ENCODE measurements at regions of chr3 and their contacts with region 1.

Region 1: DNA sequence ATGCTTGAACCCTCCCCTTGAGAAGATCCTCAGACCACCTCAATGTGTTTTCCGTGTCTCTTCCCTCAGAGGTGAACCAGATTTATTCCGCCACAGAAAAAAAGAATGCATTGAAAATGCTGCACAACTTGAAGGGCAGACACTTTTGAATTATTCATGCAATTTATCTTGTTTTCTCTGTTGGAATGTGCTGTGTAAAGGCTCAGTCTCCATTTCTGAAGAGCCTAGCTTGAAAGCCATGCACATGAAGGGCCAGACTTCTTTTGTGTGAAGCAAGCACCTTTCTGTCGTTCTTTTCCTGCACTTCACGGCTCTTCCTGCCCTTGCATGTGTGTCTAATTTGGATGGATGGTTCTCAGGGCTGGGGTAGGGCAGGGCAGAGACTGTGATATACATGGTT is 79.0 kb upstream of the ATP13A5 start:
- DNase-seq: no peak
- H3K4me3 ChIP-seq: no peak overlapping the region
- H3K27ac ChIP-seq: no peak overlapping the region
- H3K4me1 ChIP-seq: no peaks in the 10 kb centered on the region
- H3K27me3 ChIP-seq: no peaks in the 10 kb centered on the region
- CTCF ChIP-seq: no peak
- EP300 ChIP-seq: no peak
- POLR2A ChIP-seq: no peak
- RAD21 ChIP-seq: no peak

Region 2: GRCh38 chr3:193564012-193564411 is 106.5 kb after region 1 on chr3:
- CTCF ChIA-PET with region 1: interaction called, 30 read pairs
- POLR2A ChIA-PET with region 1: no interaction called
- DNase-seq: no peak
- H3K4me3 ChIP-seq: no peak overlapping the region
- H3K27ac ChIP-seq: no peak overlapping the region
- H3K4me1 ChIP-seq: no peaks in the 10 kb centered on the region
- H3K27me3 ChIP-seq: no peaks in the 10 kb centered on the region
- CTCF ChIP-seq: peak; percentile 67 to 70 (median 68)
- EP300 ChIP-seq: no peak
- POLR2A ChIP-seq: no peak
- RAD21 ChIP-seq: peak; percentile 69 to 74

Region 3: DNA sequence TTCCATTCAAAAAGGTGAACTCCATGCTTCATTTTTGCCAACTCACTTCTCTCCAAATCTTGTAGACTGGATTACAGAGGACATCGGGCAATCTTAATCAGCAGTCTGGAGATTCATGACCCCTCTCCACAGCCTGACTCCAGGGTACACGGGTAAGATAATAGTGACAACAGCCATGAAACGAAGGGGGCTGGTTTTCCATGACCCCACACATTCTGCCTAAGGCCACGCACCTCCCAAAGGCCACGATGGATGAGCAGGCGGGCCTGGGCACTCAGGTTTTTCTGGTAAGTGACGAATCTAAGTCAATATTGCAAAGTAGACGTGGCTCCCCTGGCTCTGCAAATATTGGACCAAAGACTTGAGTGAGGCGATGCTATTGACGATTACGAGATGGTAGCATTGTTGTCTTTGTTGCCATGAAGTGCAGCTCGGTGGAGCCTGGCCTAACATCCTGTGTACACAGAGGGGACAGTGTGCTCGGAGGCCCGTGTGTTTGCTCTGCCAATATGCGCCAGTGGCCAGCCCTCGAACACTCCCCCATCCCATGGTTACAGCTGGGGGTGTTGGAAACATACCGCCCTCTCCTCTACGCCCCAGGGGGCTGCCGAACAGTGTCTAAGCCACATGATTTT is 254.6 kb after region 1 on chr3:
- CTCF ChIA-PET with region 1: no interaction called
- POLR2A ChIA-PET with region 1: no interaction called
- DNase-seq: no peak
- H3K4me3 ChIP-seq: no peak overlapping the region
- H3K27ac ChIP-seq: no peak overlapping the region
- H3K4me1 ChIP-seq: peaks cover 0 to 11% (median 6%) of the 10 kb centered on the region in 4 experiments; a peak in 5 of 7 replicates
- H3K27me3 ChIP-seq: no peaks in the 10 kb centered on the region
- CTCF ChIP-seq: no peak
- EP300 ChIP-seq: no peak
- POLR2A ChIP-seq: no peak
- RAD21 ChIP-seq: no peak

Measured in H1 (cell line).